ENCODE measurements at regions of chr22 and their contacts with region 1.

Region 1: DNA sequence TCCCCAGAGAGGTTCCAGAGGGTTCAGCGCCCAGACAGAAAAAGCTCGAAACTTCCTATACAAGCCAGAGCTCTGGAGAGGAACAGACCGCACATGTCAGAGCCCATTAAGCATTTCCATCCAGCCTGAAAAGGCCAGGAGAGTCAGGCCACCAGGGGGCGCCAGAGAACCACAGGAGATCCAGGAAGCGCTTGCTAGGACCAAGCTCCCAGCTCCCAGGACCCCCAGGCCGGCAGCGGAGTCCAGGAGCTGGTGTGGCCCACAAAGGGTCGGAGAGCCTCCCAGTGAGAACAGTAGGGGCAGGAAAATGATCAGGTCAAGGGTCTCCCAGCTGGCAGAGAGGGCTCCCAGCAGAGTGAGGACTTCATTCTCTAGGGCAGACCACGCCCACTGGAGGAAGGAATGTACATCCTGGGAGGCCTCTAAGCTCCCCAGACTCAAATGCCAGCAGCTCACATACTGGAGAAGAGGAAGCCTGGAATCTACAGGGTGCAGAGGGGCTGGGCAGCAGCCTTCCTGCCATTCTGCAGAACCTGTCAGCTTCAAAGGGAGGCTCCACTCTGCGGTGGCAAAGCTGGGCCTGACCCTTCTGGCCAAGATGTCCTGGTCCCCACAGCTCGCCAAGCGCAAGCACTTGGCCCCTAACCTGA is 2.1 kb upstream of the MEI1 start:
- DNase-seq: peak; percentile 90 to 100
- H3K4me3 ChIP-seq: peak overlapping the region in 1 of 4 experiments; percentile 28; a peak in 1 of 8 replicates
- H3K27ac ChIP-seq: no peak overlapping the region
- H3K4me1 ChIP-seq: peaks cover 0 to 6% (median 4%) of the 10 kb centered on the region in 4 experiments; a peak in 5 of 7 replicates
- H3K27me3 ChIP-seq: peaks cover 0 to 10% (median 6%) of the 10 kb centered on the region in 4 experiments; a peak in 6 of 7 replicates
- CTCF ChIP-seq: peak; percentile 90
- EP300 ChIP-seq: no peak
- POLR2A ChIP-seq: no peak
- RAD21 ChIP-seq: peak; percentile 89 to 92

Region 2: DNA sequence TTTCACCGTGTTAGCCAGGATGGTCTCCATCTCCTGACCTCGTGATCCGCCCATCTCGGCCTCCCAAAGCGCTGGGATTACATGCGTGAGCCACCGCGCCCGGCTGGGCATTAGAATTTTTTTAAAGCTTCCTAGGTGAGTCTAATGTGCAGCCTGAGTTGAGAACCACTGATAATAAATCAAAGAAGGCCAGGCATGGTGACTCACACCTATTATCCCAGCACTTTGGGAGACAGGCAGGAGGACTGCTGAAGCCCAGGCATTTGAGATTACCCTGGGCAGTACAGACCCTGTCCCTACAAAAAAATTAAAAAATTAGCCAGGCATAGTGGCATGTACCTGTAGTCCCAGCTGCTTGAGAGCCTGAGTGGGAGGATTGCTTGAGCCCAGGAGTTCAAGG is 15.8 kb after region 1 on chr22:
- CTCF ChIA-PET with region 1: interaction called, 28 read pairs
- POLR2A ChIA-PET with region 1: interaction called, 3 read pairs
- DNase-seq: no peak
- H3K4me3 ChIP-seq: no peak overlapping the region
- H3K27ac ChIP-seq: no peak overlapping the region
- H3K4me1 ChIP-seq: no peaks in the 10 kb centered on the region
- H3K27me3 ChIP-seq: no peaks in the 10 kb centered on the region; a peak in 2 of 7 replicates
- CTCF ChIP-seq: no peak
- EP300 ChIP-seq: no peak
- POLR2A ChIP-seq: no peak
- RAD21 ChIP-seq: no peak

Region 3: GRCh38 chr22:41752011-41752970 is 55.0 kb after region 1 on chr22:
- CTCF ChIA-PET with region 1: interaction called, 28 read pairs
- POLR2A ChIA-PET with region 1: no interaction called
- DNase-seq: no peak
- H3K4me3 ChIP-seq: no peak overlapping the region
- H3K27ac ChIP-seq: no peak overlapping the region
- H3K4me1 ChIP-seq: peaks cover 0 to 7% (median 4%) of the 10 kb centered on the region in 4 experiments; a peak in 5 of 7 replicates
- H3K27me3 ChIP-seq: no peaks in the 10 kb centered on the region; a peak in 2 of 7 replicates
- CTCF ChIP-seq: no peak
- EP300 ChIP-seq: no peak
- POLR2A ChIP-seq: no peak
- RAD21 ChIP-seq: no peak

Region 4: GRCh38 chr22:41800348-41801146 is 103.3 kb after region 1 on chr22 and contains the start of gene CCDC134:
- CTCF ChIA-PET with region 1: interaction called, 13 read pairs
- POLR2A ChIA-PET with region 1: interaction called, 4 read pairs
- DNase-seq: peak; percentile 50 to 93
- H3K4me3 ChIP-seq: peak within 1 kb of the TSS; percentile 78 to 91 (median 86)
- H3K27ac ChIP-seq: peak within 1 kb of the TSS; percentile 73
- H3K4me1 ChIP-seq: peaks cover 8 to 15% (median 9%) of the 10 kb centered on the region in 4 experiments
- H3K27me3 ChIP-seq: no peaks in the 10 kb centered on the region
- CTCF ChIP-seq: no peak
- EP300 ChIP-seq: 0 out of 3 replicates have a peak, but pooled peaks of 1 of the 2 experiments have one; percentile 14
- POLR2A ChIP-seq: peak; percentile 83 to 94
- RAD21 ChIP-seq: no peak
- total RNA-seq, gene CCDC134: 20.0 and 21.4 TPM in 2 replicates

Region 5: DNA sequence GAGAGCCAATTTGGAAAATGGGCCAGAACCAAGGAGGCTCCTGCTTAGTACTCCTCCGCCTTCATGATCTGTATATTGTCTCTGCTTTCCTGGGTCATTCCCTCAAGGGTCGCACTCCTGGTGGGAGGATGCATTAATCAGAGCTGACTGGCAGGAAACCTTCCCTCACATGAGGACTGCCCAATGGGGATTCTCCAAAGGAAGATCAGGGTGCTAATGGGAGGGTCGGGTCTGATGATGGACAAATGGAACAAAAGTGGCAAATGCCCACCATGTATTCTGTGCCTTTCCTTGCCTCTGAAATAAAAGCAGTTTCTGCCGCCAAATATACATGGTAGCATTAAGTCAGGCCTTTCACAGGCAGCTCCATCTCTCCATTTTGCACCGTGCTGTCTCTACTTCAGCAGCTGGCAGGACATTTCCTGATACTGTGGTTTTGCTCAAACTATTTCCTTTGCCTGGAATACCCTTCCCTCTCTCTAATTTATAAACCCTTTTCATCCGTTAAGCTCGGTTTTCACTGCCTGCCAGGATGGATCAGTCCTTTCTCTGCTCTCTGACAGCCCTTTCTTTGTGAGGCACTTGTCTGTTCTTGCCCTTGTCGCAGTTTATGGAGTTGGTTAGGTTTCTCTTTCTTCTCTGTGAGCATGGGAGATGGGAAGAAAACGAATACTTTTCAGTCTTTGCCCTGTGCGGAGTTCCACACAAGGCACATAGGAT is 149.2 kb after region 1 on chr22:
- CTCF ChIA-PET with region 1: interaction called, 10 read pairs
- POLR2A ChIA-PET with region 1: no interaction called
- DNase-seq: no peak
- H3K4me3 ChIP-seq: no peak overlapping the region
- H3K27ac ChIP-seq: 0 out of 2 replicates have a peak overlapping the region, but pooled peaks have one; percentile 9
- H3K4me1 ChIP-seq: peaks cover 11 to 38% (median 26%) of the 10 kb centered on the region in 4 experiments
- H3K27me3 ChIP-seq: no peaks in the 10 kb centered on the region
- CTCF ChIP-seq: no peak
- EP300 ChIP-seq: no peak
- POLR2A ChIP-seq: no peak
- RAD21 ChIP-seq: no peak

Region 6: GRCh38 chr22:41940832-41941765 is 243.8 kb after region 1 on chr22:
- CTCF ChIA-PET with region 1: interaction called, 11 read pairs
- POLR2A ChIA-PET with region 1: no interaction called
- DNase-seq: peak in 1 of 2 experiments; percentile 95
- H3K4me3 ChIP-seq: no peak overlapping the region
- H3K27ac ChIP-seq: no peak overlapping the region
- H3K4me1 ChIP-seq: peaks cover 4 to 7% (median 5%) of the 10 kb centered on the region in 4 experiments
- H3K27me3 ChIP-seq: no peaks in the 10 kb centered on the region
- CTCF ChIP-seq: peak; percentile 92 to 96 (median 95)
- EP300 ChIP-seq: no peak
- POLR2A ChIP-seq: no peak
- RAD21 ChIP-seq: peak; percentile 95 to 96

Measured in H1 (cell line).